ENCODE measurements at regions of chr10 and their contacts with region 1.

Region 1: GRCh38 chr10:17643755-17644484 is at the start of gene STAM:
- DNase-seq: peak; percentile 93
- H3K4me3 Mint-ChIP-seq: peak within 1 kb of the TSS; percentile 100
- H3K27ac Mint-ChIP-seq: peak within 1 kb of the TSS; percentile 98
- H3K4me1 Mint-ChIP-seq: peaks cover 58% of the 10 kb centered on the region
- H3K27me3 Mint-ChIP-seq: no peaks in the 10 kb centered on the region
- total RNA-seq, gene STAM: 39.8 to 39.9 TPM

Region 2: DNA sequence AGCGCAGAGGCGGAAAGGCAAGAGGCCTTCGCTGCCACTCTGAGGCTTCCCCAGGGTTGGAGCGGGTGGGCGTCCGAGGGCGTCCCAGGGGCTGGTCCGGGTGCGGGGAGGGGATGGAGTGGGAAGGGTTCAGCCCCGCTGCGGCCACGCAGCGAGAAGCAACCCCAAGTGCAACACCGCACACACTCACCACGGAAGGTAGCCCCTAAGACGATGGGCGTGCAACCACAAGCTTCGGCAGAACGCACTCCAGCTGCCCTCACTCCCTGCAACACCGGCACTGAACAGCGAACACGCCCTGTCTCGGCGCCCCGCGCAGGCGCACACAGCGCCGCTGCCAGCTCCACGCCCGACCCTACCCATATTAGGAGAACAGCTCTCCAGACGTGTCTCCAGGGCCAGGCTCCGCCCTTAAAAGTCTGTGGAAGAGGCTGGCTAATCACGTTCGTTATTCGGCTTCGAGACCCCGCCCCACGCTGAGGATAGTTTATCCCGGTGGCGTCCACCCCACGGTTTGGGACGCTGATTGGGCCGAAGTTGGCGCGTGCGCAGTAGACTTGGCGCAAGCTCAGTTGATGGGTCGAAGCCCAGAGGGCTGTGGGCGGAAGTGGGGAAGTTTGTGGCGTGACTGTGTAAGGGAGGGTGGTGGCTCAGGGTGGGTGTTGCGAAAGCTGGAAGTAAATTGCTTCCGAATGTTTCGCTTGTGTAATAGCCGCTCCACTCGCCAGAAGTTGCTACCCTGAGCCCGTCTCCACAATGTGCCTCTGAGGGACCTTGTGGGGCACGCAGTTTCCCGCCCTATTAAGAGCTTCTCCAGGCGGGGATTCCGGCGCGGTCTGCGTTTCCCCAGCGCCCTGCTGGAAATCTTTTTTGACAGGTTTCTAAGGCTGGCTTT is 826.5 kb before region 1 on chr10 and contains the start of gene RSU1:
- CTCF ChIA-PET with region 1: no interaction called
- POLR2A ChIA-PET with region 1: interaction called, 10 read pairs
- DNase-seq: peak; percentile 100
- H3K4me3 Mint-ChIP-seq: peak within 1 kb of the TSS; percentile 85
- H3K27ac Mint-ChIP-seq: peak within 1 kb of the TSS; percentile 92
- H3K4me1 Mint-ChIP-seq: peaks cover 40% of the 10 kb centered on the region
- H3K27me3 Mint-ChIP-seq: peaks cover 4% of the 10 kb centered on the region
- total RNA-seq, gene RSU1: 74.3 to 74.9 TPM

Region 3: GRCh38 chr10:17430647-17431355 is 213.1 kb before region 1 on chr10:
- CTCF ChIA-PET with region 1: interaction called, 3 read pairs
- POLR2A ChIA-PET with region 1: interaction called, 15 read pairs
- DNase-seq: peak; percentile 63
- H3K4me3 Mint-ChIP-seq: no peak overlapping the region
- H3K27ac Mint-ChIP-seq: no peak overlapping the region
- H3K4me1 Mint-ChIP-seq: peaks cover 59% of the 10 kb centered on the region
- H3K27me3 Mint-ChIP-seq: peaks cover 13% of the 10 kb centered on the region

Region 4: DNA sequence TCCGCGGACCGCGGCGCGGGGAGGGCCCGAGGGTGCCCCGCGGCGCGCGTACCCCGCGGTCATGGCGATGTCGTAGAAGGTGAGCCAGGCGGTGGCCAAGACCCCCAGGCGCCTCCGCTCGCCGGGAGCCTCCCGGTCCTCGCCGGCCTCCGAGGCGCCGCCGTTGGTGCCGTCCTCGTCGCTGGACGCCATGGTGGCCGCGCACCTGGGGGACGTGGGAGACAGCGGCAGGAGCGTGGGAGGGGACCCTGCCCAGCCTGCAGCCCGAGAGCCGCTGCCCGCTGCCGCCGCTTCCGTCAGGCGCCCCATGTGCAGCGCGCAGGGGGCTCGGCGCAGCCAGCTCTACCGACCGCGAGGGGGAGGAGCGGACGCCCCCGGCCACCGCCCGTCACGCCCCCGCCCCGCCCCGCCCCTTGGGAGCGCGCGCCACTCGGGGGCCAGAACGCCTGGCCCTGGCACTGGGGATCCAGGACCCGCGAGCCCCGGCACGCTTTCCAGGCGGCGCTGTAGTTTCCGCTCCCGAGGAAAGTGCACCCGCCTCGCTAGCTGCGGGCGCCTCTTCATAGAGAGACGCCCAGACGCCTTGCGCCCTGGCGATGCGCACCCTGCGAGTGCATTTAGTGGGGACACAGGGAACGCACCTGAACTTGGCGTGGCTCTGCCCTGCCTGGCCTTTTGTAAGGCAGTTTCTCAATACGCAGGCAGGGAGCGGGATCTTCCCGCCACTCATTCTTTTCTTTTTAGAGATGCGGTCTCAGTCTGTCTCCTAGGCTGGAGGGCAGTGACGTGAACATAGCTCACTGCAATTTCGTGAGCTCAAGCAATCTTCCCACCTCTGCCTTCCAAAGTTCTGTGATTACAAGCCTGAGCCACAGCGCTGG is 26.6 kb before region 1 on chr10 and contains the start of gene HACD1:
- CTCF ChIA-PET with region 1: interaction called, 8 read pairs
- POLR2A ChIA-PET with region 1: interaction called, 28 read pairs
- DNase-seq: peak; percentile 64
- H3K4me3 Mint-ChIP-seq: peak within 1 kb of the TSS; percentile 83
- H3K27ac Mint-ChIP-seq: no peak within 1 kb of the TSS
- H3K4me1 Mint-ChIP-seq: peaks cover 9% of the 10 kb centered on the region
- H3K27me3 Mint-ChIP-seq: peaks cover 23% of the 10 kb centered on the region
- total RNA-seq, gene HACD1: 3.7 to 4.6 TPM

Region 5: DNA sequence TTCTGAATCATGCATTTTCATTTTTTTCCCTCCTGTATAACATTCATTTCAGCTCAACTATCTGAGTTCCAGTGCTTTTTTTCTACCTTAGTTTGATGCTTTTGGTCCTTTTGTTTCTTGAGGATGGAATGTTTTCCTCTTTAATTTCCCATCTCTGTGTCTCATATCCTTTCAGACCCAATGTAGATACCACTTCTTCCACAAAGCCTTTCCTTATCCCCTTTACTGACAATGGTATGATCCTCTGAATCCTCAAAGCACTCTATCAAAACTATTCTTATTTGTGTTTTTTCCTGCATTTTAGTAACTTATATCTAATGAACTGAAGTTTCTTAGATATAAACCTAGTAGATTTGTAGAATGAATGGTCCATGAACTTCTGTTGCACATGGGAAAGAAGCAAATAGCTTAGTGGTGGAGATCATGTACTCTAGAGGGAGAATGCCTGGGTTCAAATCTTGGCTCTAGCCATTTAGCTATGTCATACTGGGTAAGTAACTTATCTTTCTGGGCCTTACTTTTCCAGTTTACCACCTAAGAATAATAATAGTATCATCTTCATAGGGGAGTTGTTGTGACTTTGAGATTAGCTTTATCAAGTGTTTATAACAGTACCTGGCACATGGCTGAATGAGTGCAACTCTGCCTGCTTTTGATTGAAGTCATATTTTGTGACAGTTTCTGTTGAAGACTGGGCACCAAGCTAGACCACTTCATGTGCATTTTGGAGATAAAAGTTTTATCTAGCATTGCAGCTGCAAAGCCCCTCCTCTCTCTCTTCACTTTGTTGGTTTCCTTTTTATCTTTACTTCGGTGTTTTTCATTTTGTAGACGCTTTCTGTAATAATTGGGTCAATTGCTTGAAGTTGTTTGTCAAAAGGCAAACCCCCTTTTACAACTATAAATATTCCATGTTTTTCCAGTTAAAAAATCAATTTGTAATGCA is 18.5 kb after region 1 on chr10:
- CTCF ChIA-PET with region 1: interaction called, 8 read pairs
- POLR2A ChIA-PET with region 1: interaction called, 237 read pairs
- DNase-seq: no peak
- H3K4me3 Mint-ChIP-seq: no peak overlapping the region
- H3K27ac Mint-ChIP-seq: no peak overlapping the region
- H3K4me1 Mint-ChIP-seq: peaks cover 42% of the 10 kb centered on the region
- H3K27me3 Mint-ChIP-seq: no peaks in the 10 kb centered on the region

Region 6: DNA sequence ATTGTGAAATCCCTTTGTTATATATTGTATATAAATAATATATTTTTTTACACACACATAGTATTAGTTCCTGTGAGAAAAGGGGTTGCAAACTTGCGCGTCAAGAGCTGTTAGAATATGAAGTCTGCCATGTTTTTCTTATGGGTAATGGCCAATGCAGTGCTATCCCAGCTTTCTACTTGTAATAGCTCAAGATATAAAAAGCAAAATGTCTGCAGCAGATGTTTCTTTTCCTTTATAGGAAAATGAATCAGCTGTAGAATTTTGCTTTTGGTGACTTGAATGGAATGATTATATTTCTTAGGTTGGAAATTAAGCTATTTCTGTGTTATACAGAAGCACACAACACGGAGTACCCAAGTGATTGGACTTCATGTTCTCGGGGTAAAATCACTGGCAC is 54.8 kb after region 1 on chr10:
- CTCF ChIA-PET with region 1: no interaction called
- POLR2A ChIA-PET with region 1: interaction called, 11 read pairs
- DNase-seq: no peak
- H3K4me3 Mint-ChIP-seq: no peak overlapping the region
- H3K27ac Mint-ChIP-seq: no peak overlapping the region
- H3K4me1 Mint-ChIP-seq: peaks cover 6% of the 10 kb centered on the region
- H3K27me3 Mint-ChIP-seq: no peaks in the 10 kb centered on the region